ENCODE measurements at regions of chr17 and their contacts with region 1.

Region 1: DNA sequence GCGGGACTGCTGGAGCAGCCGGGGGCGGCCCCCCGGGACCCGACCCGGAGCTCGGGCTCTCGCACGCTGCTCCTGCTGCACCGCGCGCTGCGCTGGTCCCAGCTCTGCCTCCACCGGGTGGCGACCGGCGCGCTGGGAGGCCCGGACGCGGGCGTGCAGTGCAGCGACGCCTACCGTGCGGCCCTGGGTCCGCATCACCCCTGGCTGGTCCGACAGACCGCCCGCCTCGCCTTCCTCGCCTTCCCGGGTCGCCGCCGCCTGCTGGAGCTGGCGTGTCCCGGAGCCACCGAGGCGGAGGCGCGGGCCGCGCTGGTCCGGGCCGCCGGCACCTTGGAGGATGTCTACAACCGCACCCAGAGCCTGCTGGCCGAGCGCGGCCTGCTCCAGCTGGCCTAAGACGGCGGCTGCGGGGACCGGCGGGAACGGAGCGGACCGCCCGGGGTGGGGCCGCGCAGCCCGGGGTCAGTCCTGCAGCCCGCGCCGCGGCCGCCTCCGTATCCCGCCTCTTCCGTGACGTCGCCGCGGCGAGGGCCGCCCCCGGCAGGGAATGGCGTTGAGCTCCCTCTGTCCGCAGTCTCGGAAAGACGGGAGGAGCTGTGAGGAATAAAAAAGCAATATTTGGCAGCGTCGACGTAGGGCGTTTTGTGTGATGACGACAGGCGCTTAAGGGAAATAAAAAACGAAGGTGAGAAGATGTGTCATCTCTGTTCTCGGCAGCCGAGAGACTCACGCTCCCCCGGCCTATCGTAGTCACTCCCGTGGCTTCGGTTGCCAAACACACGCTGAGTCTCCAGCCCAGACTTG is 1.3 kb downstream of the GLTPD2 start:
- DNase-seq: peak; percentile 90 to 95
- H3K4me3 ChIP-seq: peak overlapping the region; percentile 54 to 76 (median 66)
- H3K27ac ChIP-seq: peak overlapping the region; percentile 94 to 99 (median 98)
- H3K4me1 ChIP-seq: peaks cover 38 to 54% (median 47%) of the 10 kb centered on the region in 4 donors
- H3K27me3 ChIP-seq: peaks cover 0 to 21% (median 12%) of the 10 kb centered on the region in 3 donors
- CTCF ChIP-seq: peak in 5 of 7 experiments; percentile 50 to 90 (median 79)
- EP300 ChIP-seq: no peak
- POLR2A ChIP-seq: peak in 2 of 4 donors; percentile 70 to 75

Region 2: DNA sequence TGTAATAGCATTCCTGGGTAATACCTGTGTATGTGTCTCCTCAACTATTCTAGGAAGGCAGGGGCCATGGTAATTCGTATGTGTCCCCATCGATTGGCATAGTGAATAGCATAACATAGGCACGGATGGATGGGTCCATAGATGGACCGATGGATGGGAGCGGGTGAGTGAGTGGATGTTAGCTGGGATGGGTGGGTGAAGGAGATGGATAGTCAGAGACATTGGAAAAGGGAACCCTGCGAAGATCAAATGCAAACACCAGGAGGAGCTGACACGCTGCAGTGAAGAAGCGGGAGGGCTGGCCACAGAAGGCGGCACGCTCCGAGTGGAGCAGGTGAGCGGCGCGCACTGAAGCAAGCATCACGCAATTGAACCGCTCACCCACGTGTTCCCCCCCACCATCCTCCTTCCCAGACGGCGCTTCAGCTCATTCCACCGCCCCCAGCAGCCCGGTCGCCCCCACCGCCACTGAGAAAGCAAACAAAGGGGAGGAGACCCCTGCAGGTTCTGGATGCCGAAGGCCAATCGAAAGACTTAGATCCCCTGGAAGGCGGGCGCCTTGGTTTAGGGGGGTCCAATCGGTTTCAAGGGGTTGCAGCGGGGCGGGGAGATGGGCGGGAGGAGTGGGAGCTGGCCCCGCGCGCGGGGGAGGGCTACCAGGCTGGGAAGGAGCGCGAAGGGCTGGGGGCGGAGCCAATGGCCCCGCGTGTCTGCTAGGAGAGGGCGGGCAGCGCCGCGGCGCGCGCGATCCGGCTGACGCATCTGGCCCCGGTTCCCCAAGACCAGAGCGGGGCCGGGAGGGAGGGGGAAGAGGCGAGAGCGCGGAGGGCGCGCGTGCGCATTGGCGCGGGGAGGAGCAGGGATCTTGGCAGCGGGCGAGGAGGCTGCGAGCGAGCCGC is 80.1 kb before region 1 on chr17 and contains the start of gene ARRB2:
- intact Hi-C with region 1: loop called (anchors 10 kb)
- DNase-seq: peak; percentile 99 to 100
- H3K4me3 ChIP-seq: peak within 1 kb of the TSS; percentile 72 to 89 (median 82)
- H3K27ac ChIP-seq: peak within 1 kb of the TSS; percentile 82 to 93 (median 92)
- H3K4me1 ChIP-seq: peaks cover 19 to 47% (median 31%) of the 10 kb centered on the region in 4 donors
- H3K27me3 ChIP-seq: no peaks in the 10 kb centered on the region
- CTCF ChIP-seq: peak in 5 of 7 experiments; percentile 46 to 91 (median 65)
- EP300 ChIP-seq: no peak
- POLR2A ChIP-seq: no peak
- total RNA-seq, gene ARRB2: 18.7 to 157 (median 36.6) TPM

Region 3: GRCh38 chr17:4739122-4740024 is 50.7 kb before region 1 on chr17 and contains the starts of genes CXCL16 and ZMYND15:
- intact Hi-C with region 1: loop called (anchors 10 kb)
- DNase-seq: peak; percentile 82 to 92
- H3K4me3 ChIP-seq: peak within 1 kb of the TSS; percentile 66 to 76 (median 72)
- H3K27ac ChIP-seq: peak within 1 kb of the TSS; percentile 77 to 86 (median 85)
- H3K4me1 ChIP-seq: peaks cover 11 to 43% (median 15%) of the 10 kb centered on the region in 4 donors
- H3K27me3 ChIP-seq: peaks cover 0 to 19% (median 0%) of the 10 kb centered on the region in 3 donors
- CTCF ChIP-seq: no peak
- EP300 ChIP-seq: no peak
- POLR2A ChIP-seq: no peak
- total RNA-seq, gene CXCL16: 17.4 to 47.4 (median 30.9) TPM
- total RNA-seq, gene ZMYND15: 0.43 to 3.1 (median 1.5) TPM in 3 of 5 donors, not detected in the others

Region 4: DNA sequence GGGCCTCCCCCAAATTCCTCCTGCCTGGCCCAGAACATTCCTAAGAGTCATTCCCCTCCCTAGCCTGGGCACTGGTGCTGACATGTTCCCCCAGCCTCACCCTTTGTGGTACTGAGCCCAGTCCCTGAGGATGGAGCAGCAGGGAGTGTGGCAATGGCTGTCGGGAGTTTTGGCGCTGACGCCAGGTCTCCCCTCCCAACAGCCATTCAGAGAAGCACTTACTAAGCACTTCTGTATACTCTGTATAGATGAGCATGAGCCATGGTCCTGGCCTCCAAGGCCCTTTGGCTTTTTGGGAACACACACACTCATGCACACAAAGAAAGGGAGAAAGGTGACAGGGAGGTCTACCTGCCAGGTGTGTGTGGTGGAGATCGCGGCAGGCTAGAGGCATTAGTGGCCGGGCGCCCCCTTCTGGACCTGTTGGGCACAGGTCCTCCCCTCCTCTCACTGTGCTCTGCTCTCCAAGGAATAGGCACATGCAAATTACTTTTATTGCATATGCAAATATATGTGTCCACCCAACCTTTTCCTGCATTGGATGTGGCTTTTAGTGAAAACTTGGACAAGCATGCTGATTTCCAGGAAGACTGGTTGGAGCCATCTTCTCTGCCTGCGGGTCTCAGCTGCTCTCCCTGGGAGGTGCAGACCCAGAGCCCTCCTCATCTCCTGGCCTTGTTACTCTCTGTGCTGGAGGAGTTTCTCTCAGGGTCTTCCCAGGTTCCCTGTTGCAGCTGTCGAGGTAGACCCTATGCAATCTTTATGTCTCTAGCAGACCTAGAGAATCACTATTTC is 91.9 kb after region 1 on chr17:
- intact Hi-C with region 1: loop called (anchors 5 kb)
- DNase-seq: peak; percentile 83 to 87
- H3K4me3 ChIP-seq: no peak overlapping the region
- H3K27ac ChIP-seq: no peak overlapping the region
- H3K4me1 ChIP-seq: peaks cover 0 to 7% (median 3%) of the 10 kb centered on the region in 4 donors
- H3K27me3 ChIP-seq: no peaks in the 10 kb centered on the region
- CTCF ChIP-seq: peak in 5 of 7 experiments; percentile 69 to 84 (median 80)
- EP300 ChIP-seq: no peak
- POLR2A ChIP-seq: no peak